Astrocyte of the cerebellum (primary cell): ENCODE measurements at regions of chr16 and their contacts with region 1.

Region 1: DNA sequence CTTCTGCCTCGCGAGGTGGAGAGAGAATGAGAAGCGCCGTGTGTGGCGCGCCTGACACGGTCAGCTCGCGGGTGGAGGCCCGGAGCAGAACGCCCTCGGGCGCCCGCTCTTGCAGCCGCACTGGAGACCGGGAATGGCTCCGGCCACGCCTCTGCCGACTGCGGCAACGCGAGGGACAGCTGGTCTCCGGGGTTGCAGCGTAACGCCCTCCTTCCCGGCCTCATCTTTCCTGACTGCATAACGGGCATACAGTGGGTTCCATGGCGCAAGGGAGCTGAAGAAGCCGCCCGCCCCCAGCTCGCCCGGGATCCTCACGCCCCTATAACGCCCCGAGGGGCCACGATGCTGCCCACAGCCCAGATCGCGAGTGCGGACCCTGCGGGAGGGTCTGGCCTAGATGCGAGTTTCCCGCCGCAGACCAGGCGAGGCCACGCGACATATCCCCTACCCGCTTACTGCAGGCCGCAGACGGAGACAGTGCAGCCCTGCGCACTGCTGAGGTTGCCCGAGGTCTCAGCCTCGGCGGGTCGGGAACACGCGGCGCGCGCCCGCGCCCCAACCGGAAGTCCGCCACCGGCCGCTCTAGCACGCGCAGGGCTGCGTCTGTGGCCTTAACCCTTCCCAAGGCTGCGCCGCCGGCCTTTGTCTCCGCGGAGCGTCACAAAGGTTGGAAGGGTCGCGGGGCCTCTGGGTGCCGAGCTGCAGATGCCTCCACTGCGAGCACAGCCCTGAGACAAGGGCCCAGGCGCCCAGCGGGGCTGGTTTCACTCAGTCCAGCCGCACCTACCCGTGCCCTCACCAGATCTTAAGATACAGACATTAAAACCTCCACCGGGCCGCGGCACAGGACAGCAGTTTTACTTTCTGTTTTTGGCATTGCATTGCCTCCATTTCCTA is 18.8 kb downstream of the BCL7C start:
- DNase-seq: peak; percentile 56
- H3K4me3 ChIP-seq: peak overlapping the region; percentile 67
- CTCF ChIP-seq: no peak

Region 2: DNA sequence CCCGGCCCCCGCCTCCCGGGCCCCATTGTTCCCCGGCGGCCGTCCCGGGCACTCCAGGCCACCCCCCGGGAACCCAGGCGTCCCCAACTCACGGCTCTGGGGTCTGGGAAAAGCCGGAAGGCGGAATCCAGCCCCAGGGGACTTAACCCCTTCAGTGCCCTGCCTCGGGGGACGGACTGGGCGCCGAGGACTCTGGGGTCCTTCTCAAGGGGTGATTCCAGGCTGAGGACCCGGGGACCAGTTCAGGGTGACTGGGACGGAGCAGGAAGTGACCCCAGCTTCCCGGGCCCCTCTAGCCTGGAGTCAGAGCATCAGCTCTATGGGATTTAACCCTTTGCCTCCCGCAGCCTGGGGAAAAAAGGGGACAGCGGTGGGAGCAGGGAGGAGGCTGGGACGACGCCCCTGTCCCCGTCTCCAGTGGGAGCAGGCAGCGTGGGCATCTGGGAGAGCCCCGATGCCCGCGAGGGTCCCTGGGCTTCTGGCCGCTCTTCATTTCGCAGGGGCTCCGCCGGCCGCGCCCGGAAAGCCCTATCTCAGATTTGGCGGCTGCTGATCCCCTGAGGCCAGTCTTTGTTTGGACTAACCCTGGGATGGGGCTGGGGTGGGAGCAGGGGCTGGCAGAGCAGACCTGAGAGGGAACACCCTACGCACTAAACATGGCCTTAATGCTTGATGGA is 88.0 kb before region 1 on chr16 and contains the start of gene ZNF629:
- in situ Hi-C with region 1: loop called (anchors 10 kb)
- DNase-seq: no peak
- H3K4me3 ChIP-seq: peak within 1 kb of the TSS; percentile 96
- CTCF ChIP-seq: no peak